ENCODE measurements at regions of chr2 and their contacts with region 1.

Region 1: GRCh38 chr2:27191053-27191829 is 20.6 kb upstream of the ATRAID start:
- DNase-seq: peak; percentile 87
- ATAC-seq: peak; percentile 93
- H3K4me3 ChIP-seq: no peak overlapping the region
- H3K27ac ChIP-seq: peak overlapping the region; percentile 7
- H3K4me1 ChIP-seq: peaks cover 43% of the 10 kb centered on the region
- H3K27me3 ChIP-seq: no peaks in the 10 kb centered on the region
- CTCF ChIP-seq: peak; percentile 93
- EP300 ChIP-seq: peak in 1 of 2 experiments; percentile 25; a peak in 1 of 4 replicates
- POLR2A ChIP-seq: no peak
- RAD21 ChIP-seq: peak; percentile 97

Region 2: GRCh38 chr2:27123302-27124231 is 67.7 kb before region 1 on chr2 and contains the start of gene ABHD1:
- CTCF ChIA-PET with region 1: no interaction called
- POLR2A ChIA-PET with region 1: interaction called, 5 read pairs
- in situ Hi-C with region 1: no loop called
- intact Hi-C with region 1: loop called (anchors 5 kb)
- DNase-seq: peak; percentile 59
- ATAC-seq: peak; percentile 78
- H3K4me3 ChIP-seq: peak within 1 kb of the TSS; percentile 46 to 80 (median 62)
- H3K27ac ChIP-seq: no peak within 1 kb of the TSS
- H3K4me1 ChIP-seq: peaks cover 60% of the 10 kb centered on the region
- H3K27me3 ChIP-seq: peaks cover 2 to 42% of the 10 kb centered on the region in 2 experiments; a peak in 4 of 5 replicates
- CTCF ChIP-seq: peak; percentile 73
- EP300 ChIP-seq: no peak
- POLR2A ChIP-seq: peak; percentile 27 to 90
- RAD21 ChIP-seq: 0 out of 2 replicates have a peak, but pooled peaks have one; percentile 45
- total RNA-seq, gene ABHD1: 0.04 TPM in 1 of 2 replicates, not detected in the other

Region 3: GRCh38 chr2:27152786-27153510 is 38.3 kb before region 1 on chr2:
- CTCF ChIA-PET with region 1: interaction called, 22 read pairs
- POLR2A ChIA-PET with region 1: interaction called, 9 read pairs
- in situ Hi-C with region 1: loop called (anchors 5 kb)
- intact Hi-C with region 1: loop called (anchors 1 kb)
- DNase-seq: no peak
- ATAC-seq: no peak
- H3K4me3 ChIP-seq: no peak overlapping the region
- H3K27ac ChIP-seq: no peak overlapping the region
- H3K4me1 ChIP-seq: peaks cover 69% of the 10 kb centered on the region
- H3K27me3 ChIP-seq: peaks cover 0 to 2% of the 10 kb centered on the region in 2 experiments; a peak in 2 of 5 replicates
- CTCF ChIP-seq: no peak
- EP300 ChIP-seq: no peak
- POLR2A ChIP-seq: no peak
- RAD21 ChIP-seq: no peak

Region 4: DNA sequence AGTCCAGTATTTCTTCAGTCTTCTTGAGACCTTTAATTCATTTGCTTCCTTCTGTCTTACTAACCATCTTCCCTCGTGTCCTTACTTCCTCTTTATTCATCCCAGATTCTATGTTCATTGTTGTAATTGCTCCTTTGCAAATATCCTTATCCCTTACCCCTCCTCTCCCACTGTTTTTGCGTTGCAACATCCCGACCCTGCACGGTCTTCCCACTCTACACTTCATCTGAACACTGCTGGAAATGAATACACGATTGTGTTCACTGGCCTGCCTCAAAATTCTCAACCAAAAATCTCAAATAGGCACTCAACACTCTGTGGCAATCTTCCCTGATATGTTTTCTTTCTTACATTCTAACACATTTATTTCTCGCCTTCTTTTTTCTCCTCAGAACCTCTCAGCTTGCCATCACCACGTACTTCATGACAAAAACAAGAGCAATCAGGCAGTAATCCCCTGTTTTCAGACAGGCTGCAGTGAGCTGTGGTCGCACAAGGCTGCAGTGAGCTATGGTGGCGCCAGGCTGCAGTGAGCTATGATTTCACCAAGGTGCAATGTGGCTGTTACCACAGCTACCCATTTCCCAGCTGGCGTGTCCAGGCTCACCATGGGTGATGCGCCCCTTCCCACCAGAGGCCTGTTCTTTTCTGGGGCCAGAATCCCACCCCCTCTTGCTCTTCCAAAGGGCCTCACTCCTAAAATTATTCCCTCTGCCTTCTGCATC is 16.8 kb before region 1 on chr2:
- CTCF ChIA-PET with region 1: interaction called, 5 read pairs
- POLR2A ChIA-PET with region 1: interaction called, 6 read pairs
- in situ Hi-C with region 1: no loop called
- intact Hi-C with region 1: loop called (anchors 1 kb)
- DNase-seq: no peak
- ATAC-seq: no peak
- H3K4me3 ChIP-seq: no peak overlapping the region
- H3K27ac ChIP-seq: peak overlapping the region; percentile 43
- H3K4me1 ChIP-seq: peaks cover 98% of the 10 kb centered on the region
- H3K27me3 ChIP-seq: no peaks in the 10 kb centered on the region
- CTCF ChIP-seq: no peak
- EP300 ChIP-seq: no peak
- POLR2A ChIP-seq: no peak
- RAD21 ChIP-seq: no peak

Region 5: GRCh38 chr2:27211829-27212627 is 20.8 kb after region 1 on chr2 and contains the starts of genes ATRAID and SLC5A6:
- CTCF ChIA-PET with region 1: no interaction called
- POLR2A ChIA-PET with region 1: interaction called, 13 read pairs
- in situ Hi-C with region 1: no loop called
- intact Hi-C with region 1: no loop called
- DNase-seq: peak; percentile 82
- ATAC-seq: peak; percentile 91
- H3K4me3 ChIP-seq: peak within 1 kb of the TSS; percentile 87 to 93 (median 89)
- H3K27ac ChIP-seq: peak within 1 kb of the TSS; percentile 97
- H3K4me1 ChIP-seq: peaks cover 67% of the 10 kb centered on the region
- H3K27me3 ChIP-seq: no peaks in the 10 kb centered on the region; a peak in 1 of 5 replicates
- CTCF ChIP-seq: no peak; the same call in 1 of the 2 replicates
- EP300 ChIP-seq: peak in 1 of 2 experiments; percentile 11; a peak in 1 of 4 replicates
- POLR2A ChIP-seq: peak; percentile 95 to 98
- RAD21 ChIP-seq: peak; percentile 71
- total RNA-seq, gene ATRAID: 130 and 207 TPM in 2 replicates
- total RNA-seq, gene SLC5A6: 73.9 and 135 TPM in 2 replicates